ENCODE measurements at regions of chr7 and their contacts with region 1.

Region 1: GRCh38 chr7:116316833-116317612 is 106.7 kb downstream of the TES start:
- DNase-seq: peak; percentile 66
- ATAC-seq: peak; percentile 95
- H3K4me3 Mint-ChIP-seq: no peak overlapping the region
- H3K27ac Mint-ChIP-seq: peak overlapping the region; percentile 38
- H3K4me1 Mint-ChIP-seq: peaks cover 14% of the 10 kb centered on the region
- H3K27me3 Mint-ChIP-seq: peaks cover 16% of the 10 kb centered on the region

Region 2: GRCh38 chr7:115297656-115298055 is 1019.4 kb before region 1 on chr7:
- CTCF ChIA-PET with region 1: no interaction called
- POLR2A ChIA-PET with region 1: no interaction called
- intact Hi-C with region 1: no loop called
- DNase-seq: peak; percentile 10
- ATAC-seq: no peak
- H3K4me3 Mint-ChIP-seq: no peak overlapping the region
- H3K27ac Mint-ChIP-seq: no peak overlapping the region
- H3K4me1 Mint-ChIP-seq: no peaks in the 10 kb centered on the region
- H3K27me3 Mint-ChIP-seq: peaks cover 2% of the 10 kb centered on the region

Region 3: GRCh38 chr7:116342125-116342524 is 25.1 kb after region 1 on chr7:
- CTCF ChIA-PET with region 1: no interaction called
- POLR2A ChIA-PET with region 1: no interaction called
- intact Hi-C with region 1: loop called in 1 of 2 experiments (anchors 2 kb)
- DNase-seq: no peak
- ATAC-seq: peak; percentile 47
- H3K4me3 Mint-ChIP-seq: no peak overlapping the region
- H3K27ac Mint-ChIP-seq: no peak overlapping the region
- H3K4me1 Mint-ChIP-seq: peaks cover 8% of the 10 kb centered on the region
- H3K27me3 Mint-ChIP-seq: peaks cover 8% of the 10 kb centered on the region

Region 4: GRCh38 chr7:116464375-116464774 is 147.4 kb after region 1 on chr7:
- CTCF ChIA-PET with region 1: no interaction called
- POLR2A ChIA-PET with region 1: no interaction called
- intact Hi-C with region 1: no loop called
- DNase-seq: no peak
- ATAC-seq: no peak
- H3K4me3 Mint-ChIP-seq: no peak overlapping the region
- H3K27ac Mint-ChIP-seq: no peak overlapping the region
- H3K4me1 Mint-ChIP-seq: no peaks in the 10 kb centered on the region
- H3K27me3 Mint-ChIP-seq: peaks cover 3% of the 10 kb centered on the region

Region 5: GRCh38 chr7:116583653-116584052 is 266.6 kb after region 1 on chr7:
- CTCF ChIA-PET with region 1: no interaction called
- POLR2A ChIA-PET with region 1: no interaction called
- intact Hi-C with region 1: loop called in 1 of 2 experiments (anchors 2 kb)
- DNase-seq: peak; percentile 47
- ATAC-seq: peak; percentile 64
- H3K4me3 Mint-ChIP-seq: no peak overlapping the region
- H3K27ac Mint-ChIP-seq: no peak overlapping the region
- H3K4me1 Mint-ChIP-seq: peaks cover 21% of the 10 kb centered on the region
- H3K27me3 Mint-ChIP-seq: no peaks in the 10 kb centered on the region

Measured in activated CD4-positive, alpha-beta T cell treated with anti-CD3 and anti-CD28 coated beads for 36 hours (primary cell).